HCT116 (cell line): ENCODE measurements at regions of chr15 and their contacts with region 1.

Region 1: DNA sequence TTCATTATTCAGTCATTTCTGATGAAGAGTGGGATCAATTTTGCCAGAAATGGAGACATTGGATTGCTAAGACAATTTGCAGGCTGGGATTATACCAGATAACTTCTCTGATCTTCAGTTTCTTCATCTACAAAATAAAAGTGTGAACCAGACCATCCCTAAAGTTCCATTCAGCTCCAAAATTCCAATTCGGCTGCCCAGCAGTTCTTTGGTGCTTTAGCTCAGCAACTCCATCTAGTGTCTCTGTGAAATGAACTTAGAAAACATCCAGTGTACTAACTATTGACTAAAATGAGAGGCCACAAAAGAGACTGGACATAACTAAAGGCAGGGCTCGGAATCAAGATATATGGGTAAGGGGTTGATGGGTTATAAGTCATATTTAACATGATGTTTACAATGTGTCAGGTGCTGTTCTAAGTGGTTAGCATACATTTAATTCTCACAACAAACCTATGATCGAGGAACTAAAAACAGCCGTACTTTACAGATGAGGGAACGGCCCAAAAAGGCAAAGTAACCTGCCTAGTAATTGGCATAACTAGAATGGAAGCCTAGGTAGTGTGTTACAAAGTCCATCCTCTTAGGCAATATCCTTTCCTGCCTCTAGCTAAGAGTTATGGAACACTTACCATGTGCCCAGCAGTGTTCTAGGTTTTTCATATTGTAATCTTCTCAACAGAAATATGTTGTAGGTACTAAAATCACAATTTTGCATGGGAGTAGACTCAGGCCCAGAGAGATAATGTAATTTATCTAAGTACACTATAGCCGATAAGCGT is 17.0 kb downstream of the THAP10 start:
- DNase-seq: no peak
- ATAC-seq: peak; percentile 78
- H3K4me3 ChIP-seq: no peak overlapping the region
- H3K27ac ChIP-seq: no peak overlapping the region
- H3K4me1 ChIP-seq: peaks cover 1 to 13% of the 10 kb centered on the region in 2 experiments; a peak in 3 of 4 replicates
- H3K27me3 ChIP-seq: no peaks in the 10 kb centered on the region
- CTCF ChIP-seq: peak; percentile 46 to 76 (median 52); a peak in 5 of 6 replicates
- POLR2A ChIP-seq: no peak
- RAD21 ChIP-seq: peak; percentile 82

Region 2: DNA sequence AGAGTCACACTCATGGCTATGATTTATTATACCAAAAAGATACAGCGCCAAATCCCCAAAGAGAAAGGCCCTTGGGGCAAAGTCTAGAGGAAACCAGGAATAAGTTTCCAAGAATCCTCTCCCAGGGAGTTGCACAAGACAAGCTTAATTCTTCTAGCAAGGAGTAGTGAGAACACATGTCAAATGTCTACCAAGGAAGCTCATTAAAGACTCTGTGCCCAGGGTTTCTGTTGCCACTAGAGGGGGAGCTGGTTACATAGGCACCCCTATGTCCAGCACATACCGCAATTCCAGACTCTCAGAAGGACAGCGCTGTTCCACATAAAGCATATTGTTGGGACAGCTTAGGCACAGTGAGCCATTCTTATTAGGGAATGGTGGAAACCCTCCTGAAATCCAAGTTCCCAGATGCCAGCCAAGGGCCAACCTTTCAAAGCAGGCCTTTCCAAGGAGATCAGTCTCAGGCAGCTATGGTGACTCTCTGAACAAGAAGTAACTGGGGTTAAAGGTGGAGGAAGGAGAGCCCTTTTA is 306.0 kb before region 1 on chr15:
- CTCF ChIA-PET with region 1: interaction called, 16 read pairs
- POLR2A ChIA-PET with region 1: no interaction called
- RAD21 ChIA-PET with region 1: no interaction called
- intact Hi-C with region 1: no loop called
- DNase-seq: peak; percentile 73
- ATAC-seq: peak; percentile 89
- H3K4me3 ChIP-seq: peak overlapping the region; percentile 6 to 17; a peak in 3 of 4 replicates
- H3K27ac ChIP-seq: peak overlapping the region; percentile 56
- H3K4me1 ChIP-seq: peaks cover 20 to 25% of the 10 kb centered on the region in 2 experiments
- H3K27me3 ChIP-seq: no peaks in the 10 kb centered on the region
- CTCF ChIP-seq: peak; percentile 79 to 93 (median 87)
- POLR2A ChIP-seq: no peak
- RAD21 ChIP-seq: peak; percentile 93

Region 3: DNA sequence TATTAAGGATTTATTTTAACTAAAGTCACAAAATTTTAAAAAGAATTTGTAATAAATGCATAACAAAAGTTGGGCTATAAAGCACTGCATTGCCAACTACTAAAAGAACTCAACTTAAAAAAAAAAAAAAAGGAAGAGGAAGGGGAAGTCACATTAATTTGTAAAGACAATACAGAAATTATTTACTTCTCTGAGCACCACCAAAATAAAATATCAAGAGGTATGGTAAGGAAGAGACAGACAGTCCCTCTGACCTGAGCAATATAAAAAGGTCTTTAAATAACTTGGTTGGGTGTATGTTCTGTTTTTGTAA is 195.3 kb before region 1 on chr15:
- CTCF ChIA-PET with region 1: interaction called, 10 read pairs
- POLR2A ChIA-PET with region 1: no interaction called
- RAD21 ChIA-PET with region 1: interaction called in 1 of 2 experiments, 3 read pairs
- intact Hi-C with region 1: loop called (anchors 2 kb)
- DNase-seq: no peak
- ATAC-seq: no peak
- H3K4me3 ChIP-seq: no peak overlapping the region
- H3K27ac ChIP-seq: no peak overlapping the region
- H3K4me1 ChIP-seq: no peaks in the 10 kb centered on the region
- H3K27me3 ChIP-seq: no peaks in the 10 kb centered on the region
- CTCF ChIP-seq: no peak
- POLR2A ChIP-seq: no peak
- RAD21 ChIP-seq: no peak

Region 4: GRCh38 chr15:70826634-70827033 is 48.6 kb before region 1 on chr15:
- CTCF ChIA-PET with region 1: interaction called, 32 read pairs
- POLR2A ChIA-PET with region 1: no interaction called
- RAD21 ChIA-PET with region 1: interaction called, 4 to 8 read pairs
- intact Hi-C with region 1: loop called (anchors 1 kb)
- DNase-seq: peak; percentile 29
- ATAC-seq: peak; percentile 20; the same call in 1 of the 2 replicates
- H3K4me3 ChIP-seq: no peak overlapping the region
- H3K27ac ChIP-seq: no peak overlapping the region
- H3K4me1 ChIP-seq: peaks cover 13 to 21% of the 10 kb centered on the region in 2 experiments
- H3K27me3 ChIP-seq: no peaks in the 10 kb centered on the region
- CTCF ChIP-seq: no peak
- POLR2A ChIP-seq: no peak
- RAD21 ChIP-seq: no peak

Region 5: DNA sequence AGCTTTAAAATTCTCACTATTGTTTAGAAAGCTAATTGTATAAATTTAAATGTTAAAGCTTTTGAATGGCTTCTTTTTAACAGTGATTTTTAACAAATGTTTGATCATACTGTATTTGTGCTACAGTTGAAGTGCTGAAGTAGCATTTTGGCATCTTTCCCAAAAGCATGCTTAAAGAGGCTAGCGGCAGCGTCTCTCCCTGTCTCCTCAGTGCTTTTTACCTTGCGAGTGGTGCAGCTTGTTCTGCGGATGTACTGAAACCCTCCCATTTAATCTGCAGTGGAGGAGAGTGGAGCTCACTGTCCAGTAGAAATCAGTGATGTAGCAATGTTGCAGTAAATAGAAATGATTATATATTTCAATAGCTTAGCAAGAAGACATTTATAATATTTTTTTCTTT is 61.1 kb after region 1 on chr15:
- CTCF ChIA-PET with region 1: no interaction called
- POLR2A ChIA-PET with region 1: no interaction called
- RAD21 ChIA-PET with region 1: no interaction called
- intact Hi-C with region 1: no loop called
- DNase-seq: no peak
- ATAC-seq: no peak
- H3K4me3 ChIP-seq: no peak overlapping the region
- H3K27ac ChIP-seq: no peak overlapping the region
- H3K4me1 ChIP-seq: peaks cover 0 to 10% of the 10 kb centered on the region in 2 experiments; a peak in 2 of 4 replicates
- H3K27me3 ChIP-seq: no peaks in the 10 kb centered on the region
- CTCF ChIP-seq: no peak
- POLR2A ChIP-seq: no peak
- RAD21 ChIP-seq: no peak

Region 6: DNA sequence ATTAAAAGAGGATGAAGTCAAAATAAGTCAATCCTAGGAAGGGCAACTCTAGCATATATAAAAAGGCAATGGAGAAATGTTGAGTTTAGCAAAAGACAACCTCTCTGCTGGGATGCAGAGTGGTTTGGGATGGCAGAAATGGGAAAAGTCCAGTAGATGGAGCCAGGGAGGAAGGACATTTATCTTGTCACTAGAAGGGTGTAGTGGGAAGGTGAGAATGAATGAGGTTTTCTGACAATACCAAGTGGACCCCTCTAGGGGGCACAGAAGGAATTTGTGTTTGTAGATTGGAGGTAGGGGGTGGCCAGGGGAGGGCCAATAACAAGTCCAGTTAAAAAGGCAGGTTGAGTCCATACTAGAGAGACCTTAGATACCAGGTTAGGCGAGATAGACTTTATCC is 320.0 kb after region 1 on chr15:
- CTCF ChIA-PET with region 1: no interaction called
- POLR2A ChIA-PET with region 1: no interaction called
- RAD21 ChIA-PET with region 1: no interaction called
- intact Hi-C with region 1: no loop called
- DNase-seq: peak; percentile 13
- ATAC-seq: peak; percentile 86
- H3K4me3 ChIP-seq: no peak overlapping the region
- H3K27ac ChIP-seq: no peak overlapping the region
- H3K4me1 ChIP-seq: no peaks in the 10 kb centered on the region
- H3K27me3 ChIP-seq: no peaks in the 10 kb centered on the region
- CTCF ChIP-seq: peak; percentile 35 to 62 (median 49); a peak in 5 of 6 replicates
- POLR2A ChIP-seq: no peak
- RAD21 ChIP-seq: peak; percentile 56